ENCODE measurements at regions of chr1 and their contacts with region 1.

Region 1: GRCh38 chr1:40691538-40692428 is at the start of gene NFYC:
- DNase-seq: peak; percentile 86
- ATAC-seq: peak; percentile 81
- H3K4me3 Mint-ChIP-seq: peak within 1 kb of the TSS; percentile 94
- H3K27ac Mint-ChIP-seq: peak within 1 kb of the TSS; percentile 94
- H3K4me1 Mint-ChIP-seq: peaks cover 70% of the 10 kb centered on the region
- H3K27me3 Mint-ChIP-seq: no peaks in the 10 kb centered on the region
- CTCF ChIP-seq: no peak
- total RNA-seq, gene NFYC: 68.7 and 76.0 TPM in 2 replicates

Region 2: GRCh38 chr1:40257688-40258444 is 433.9 kb before region 1 on chr1 and contains the start of gene ZMPSTE24:
- CTCF ChIA-PET with region 1: no interaction called
- POLR2A ChIA-PET with region 1: interaction called, 7 read pairs
- intact Hi-C with region 1: loop called (anchors 1 kb)
- DNase-seq: peak; percentile 89
- ATAC-seq: peak; percentile 95
- H3K4me3 Mint-ChIP-seq: peak within 1 kb of the TSS; percentile 96
- H3K27ac Mint-ChIP-seq: peak within 1 kb of the TSS; percentile 99
- H3K4me1 Mint-ChIP-seq: peaks cover 38% of the 10 kb centered on the region
- H3K27me3 Mint-ChIP-seq: no peaks in the 10 kb centered on the region
- CTCF ChIP-seq: no peak
- total RNA-seq, gene ZMPSTE24: 17.6 and 18.6 TPM in 2 replicates

Region 3: DNA sequence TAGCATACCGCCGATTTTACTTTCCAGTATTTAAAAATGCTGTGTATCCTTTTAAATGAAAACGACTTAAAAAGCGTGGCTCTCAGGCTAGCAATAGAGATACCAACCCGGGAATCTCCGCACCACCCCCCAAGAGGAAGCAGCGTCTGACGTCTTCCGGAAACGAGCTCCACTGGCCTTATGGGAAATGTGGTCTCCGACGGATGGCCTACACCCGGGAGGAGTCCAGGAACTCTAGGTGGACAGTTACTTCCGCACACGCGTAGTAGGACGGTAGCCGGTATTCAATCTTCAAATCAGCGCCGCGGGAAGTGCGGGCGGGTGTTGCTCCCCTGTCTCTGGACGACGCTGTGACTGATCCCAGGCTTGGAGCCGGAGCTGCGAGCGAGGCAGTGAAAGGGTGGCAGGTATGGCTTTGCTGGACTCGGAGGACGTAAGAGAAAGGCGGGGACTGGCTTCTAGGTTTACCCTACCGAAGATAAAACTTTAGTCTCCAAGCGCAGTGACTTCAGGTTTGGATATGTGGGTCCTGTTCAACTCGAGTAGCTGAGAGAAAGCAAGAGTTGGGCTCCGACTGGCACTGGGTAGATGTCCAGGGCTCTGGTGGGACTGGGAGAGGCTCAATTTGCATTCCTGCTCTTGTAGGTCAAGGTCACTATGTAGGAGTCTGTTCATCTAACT is 160.3 kb before region 1 on chr1 and contains the start of gene ZNF684:
- CTCF ChIA-PET with region 1: interaction called, 4 read pairs
- POLR2A ChIA-PET with region 1: interaction called, 17 read pairs
- intact Hi-C with region 1: loop called (anchors 5 kb)
- DNase-seq: peak; percentile 65
- ATAC-seq: peak; percentile 98
- H3K4me3 Mint-ChIP-seq: peak within 1 kb of the TSS; percentile 97
- H3K27ac Mint-ChIP-seq: peak within 1 kb of the TSS; percentile 92
- H3K4me1 Mint-ChIP-seq: peaks cover 29% of the 10 kb centered on the region
- H3K27me3 Mint-ChIP-seq: peaks cover 2% of the 10 kb centered on the region
- CTCF ChIP-seq: no peak
- total RNA-seq, gene ZNF684: 5.0 and 5.4 TPM in 2 replicates

Region 4: GRCh38 chr1:40709100-40709801 is 17.5 kb after region 1 on chr1:
- CTCF ChIA-PET with region 1: interaction called, 4 read pairs
- POLR2A ChIA-PET with region 1: interaction called, 306 read pairs
- intact Hi-C with region 1: loop called (anchors 1 kb)
- DNase-seq: peak; percentile 30
- ATAC-seq: peak; percentile 89
- H3K4me3 Mint-ChIP-seq: peak overlapping the region; percentile 95
- H3K27ac Mint-ChIP-seq: peak overlapping the region; percentile 95
- H3K4me1 Mint-ChIP-seq: peaks cover 75% of the 10 kb centered on the region
- H3K27me3 Mint-ChIP-seq: no peaks in the 10 kb centered on the region
- CTCF ChIP-seq: no peak

Region 5: DNA sequence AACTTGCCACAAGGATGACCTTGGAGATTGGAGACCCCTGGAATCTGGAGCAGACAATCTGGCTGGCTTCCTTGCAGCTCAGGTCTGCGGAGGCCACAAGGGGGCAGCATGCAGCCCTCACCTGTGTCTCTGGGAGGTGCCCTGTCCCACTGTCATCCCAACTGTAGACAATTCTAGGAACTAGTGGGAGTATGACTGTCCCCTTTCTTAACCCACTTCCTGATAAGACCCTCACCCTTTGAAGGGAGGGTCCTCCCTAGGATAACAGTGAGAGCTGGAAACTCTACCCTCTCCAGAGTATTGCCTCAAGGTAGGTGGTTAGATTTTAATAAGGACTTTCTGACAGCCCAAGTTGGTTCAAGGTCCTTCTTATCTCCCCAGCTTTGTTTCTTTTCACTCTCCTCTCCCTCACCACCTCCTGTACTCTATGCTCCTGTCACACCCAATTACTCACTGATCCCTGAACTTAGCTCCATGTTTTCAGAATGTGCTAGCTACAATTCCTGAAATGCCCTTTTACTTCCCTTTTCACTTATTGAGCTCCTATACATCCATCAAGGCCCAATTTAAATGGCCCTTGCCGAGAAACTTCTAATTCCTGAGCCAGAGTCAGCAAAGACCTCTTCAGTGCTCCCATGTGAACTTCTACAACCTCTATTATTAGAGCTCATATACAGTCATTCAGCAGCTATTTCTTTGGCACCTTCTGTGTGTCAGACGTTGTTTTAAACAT is 82.6 kb after region 1 on chr1:
- CTCF ChIA-PET with region 1: interaction called, 17 read pairs
- POLR2A ChIA-PET with region 1: interaction called, 6 read pairs
- intact Hi-C with region 1: no loop called
- DNase-seq: peak; percentile 53
- ATAC-seq: peak; percentile 66
- H3K4me3 Mint-ChIP-seq: no peak overlapping the region
- H3K27ac Mint-ChIP-seq: no peak overlapping the region
- H3K4me1 Mint-ChIP-seq: no peaks in the 10 kb centered on the region
- H3K27me3 Mint-ChIP-seq: no peaks in the 10 kb centered on the region
- CTCF ChIP-seq: peak; percentile 57

Region 6: GRCh38 chr1:40956407-40956806 is 264.6 kb after region 1 on chr1:
- CTCF ChIA-PET with region 1: no interaction called
- POLR2A ChIA-PET with region 1: no interaction called
- intact Hi-C with region 1: no loop called
- DNase-seq: no peak
- ATAC-seq: peak; percentile 14
- H3K4me3 Mint-ChIP-seq: no peak overlapping the region
- H3K27ac Mint-ChIP-seq: no peak overlapping the region
- H3K4me1 Mint-ChIP-seq: peaks cover 5% of the 10 kb centered on the region
- H3K27me3 Mint-ChIP-seq: peaks cover 29% of the 10 kb centered on the region
- CTCF ChIP-seq: no peak

Region 7: DNA sequence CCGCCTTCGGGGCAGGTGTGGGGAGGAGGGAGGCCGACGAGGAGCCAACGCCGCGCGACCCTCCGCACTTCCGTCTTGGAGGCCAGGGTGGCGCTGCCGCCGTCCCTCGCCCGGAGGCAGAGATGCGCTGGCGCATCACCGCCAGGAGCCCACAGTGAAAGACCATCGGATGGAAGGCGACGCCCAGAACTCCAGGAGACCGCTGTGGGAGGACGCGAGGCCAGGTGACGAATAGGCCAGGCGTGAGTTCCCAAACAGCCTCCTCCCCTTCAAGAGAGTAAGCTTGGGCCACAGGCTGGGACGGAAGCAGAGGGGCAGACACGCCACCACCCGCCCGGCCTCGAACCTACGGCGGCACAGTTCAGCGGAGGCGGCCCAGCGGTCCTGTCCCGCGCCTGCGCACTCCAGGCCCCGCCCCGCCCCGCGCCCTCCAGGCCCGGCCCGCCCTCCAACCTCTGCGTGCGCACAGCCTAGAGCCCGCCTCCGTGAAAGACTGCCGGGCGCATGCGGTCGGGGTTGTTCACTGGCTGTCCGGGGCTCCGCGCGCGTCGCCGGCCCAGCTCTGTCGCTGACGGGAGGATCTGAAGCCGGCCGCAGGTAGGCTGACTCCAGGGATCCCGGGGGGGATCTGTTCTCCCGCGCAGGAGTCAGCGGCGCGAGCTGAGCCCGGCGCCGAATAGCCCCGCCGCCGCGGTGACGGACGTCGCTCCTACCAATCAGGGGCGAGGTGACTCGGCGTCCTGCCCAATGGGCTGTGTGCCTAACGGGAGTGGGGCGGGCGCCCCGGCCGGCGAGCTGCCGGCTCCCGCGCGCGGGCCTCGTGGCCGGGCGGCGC is 287.7 kb after region 1 on chr1 and contains the start of gene CTPS1:
- CTCF ChIA-PET with region 1: no interaction called
- POLR2A ChIA-PET with region 1: interaction called, 9 read pairs
- intact Hi-C with region 1: loop called (anchors 1 kb)
- DNase-seq: peak; percentile 95
- ATAC-seq: peak; percentile 86
- H3K4me3 Mint-ChIP-seq: peak within 1 kb of the TSS; percentile 94
- H3K27ac Mint-ChIP-seq: peak within 1 kb of the TSS; percentile 92
- H3K4me1 Mint-ChIP-seq: peaks cover 19% of the 10 kb centered on the region
- H3K27me3 Mint-ChIP-seq: no peaks in the 10 kb centered on the region
- CTCF ChIP-seq: no peak
- total RNA-seq, gene CTPS1: 39.5 and 43.0 TPM in 2 replicates